GM12878 (cell line): ENCODE measurements at regions of chr10 and their contacts with region 1.

Region 1: DNA sequence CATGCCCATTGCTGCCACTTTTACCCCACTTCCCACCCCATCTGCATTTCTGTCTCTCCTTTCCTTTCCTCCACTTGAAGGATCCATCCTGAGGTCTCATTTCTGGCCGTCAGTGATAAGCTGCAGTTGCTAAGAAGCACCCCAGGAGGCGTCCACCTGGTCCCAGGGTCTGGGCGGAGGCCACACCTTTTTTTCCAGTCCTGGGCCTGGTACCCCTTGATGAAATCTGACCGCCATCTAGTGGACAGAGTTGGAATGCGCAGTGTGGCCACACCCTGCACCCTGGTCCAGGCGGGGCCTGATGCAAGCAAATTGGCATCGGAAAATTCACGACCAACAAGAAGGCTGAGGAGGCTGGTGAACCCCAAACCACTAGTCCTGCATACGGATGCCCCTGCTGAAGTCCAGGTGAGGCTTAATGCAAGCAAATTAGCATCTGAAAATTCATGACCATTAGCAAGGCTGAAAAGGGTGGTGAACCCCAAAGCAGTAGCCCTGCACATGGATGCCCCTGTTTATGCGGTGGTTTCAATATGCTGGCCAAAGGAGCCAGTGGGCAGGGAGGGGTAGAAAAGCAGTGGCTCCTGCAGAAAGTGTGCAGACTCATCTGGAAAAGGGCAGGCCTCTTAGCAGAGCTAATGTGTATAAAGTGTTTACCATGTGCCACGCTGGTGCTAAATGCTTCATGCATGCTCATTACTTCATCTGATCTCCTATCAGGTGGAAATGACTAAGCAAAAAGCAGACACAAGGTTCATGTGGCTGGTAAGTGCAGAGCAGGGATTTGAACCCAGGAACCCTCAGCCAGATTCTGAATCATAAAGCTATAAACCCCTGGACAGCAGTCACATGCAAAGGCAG is 43.2 kb downstream of the GPAM start:
- DNase-seq: peak; percentile 8
- ATAC-seq: peak; percentile 99
- H3K4me3 ChIP-seq: no peak overlapping the region
- H3K27ac ChIP-seq: no peak overlapping the region
- H3K4me1 ChIP-seq: no peaks in the 10 kb centered on the region
- H3K27me3 ChIP-seq: no peaks in the 10 kb centered on the region
- CTCF ChIP-seq: peak; percentile 92 to 97 (median 96); a peak in 5 of 6 replicates
- EP300 ChIP-seq: no peak
- POLR2A ChIP-seq: no peak
- RAD21 ChIP-seq: peak; percentile 68

Region 2: DNA sequence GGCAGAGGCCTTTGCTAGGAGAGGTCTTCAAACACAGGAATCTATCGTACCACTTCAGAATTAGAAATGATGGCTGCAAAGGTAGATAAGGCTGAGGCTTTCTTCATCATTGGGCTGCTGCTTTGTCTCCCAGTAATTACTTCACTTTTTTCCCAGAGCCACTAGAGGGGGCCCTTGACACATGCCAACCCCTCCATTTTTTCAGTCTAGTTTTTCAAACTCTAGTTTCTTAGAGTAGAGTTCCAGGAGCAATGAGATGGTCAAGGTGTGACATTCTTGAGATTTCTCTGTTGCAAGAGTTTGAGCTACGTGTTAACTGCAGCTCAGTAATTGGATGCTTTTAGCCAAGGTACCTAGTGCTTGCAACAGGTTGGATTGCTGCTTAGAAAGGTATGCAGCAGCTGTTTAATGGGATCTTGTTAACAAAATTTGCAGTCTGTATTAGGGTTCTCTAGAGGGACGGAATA is 1530.0 kb before region 1 on chr10:
- CTCF ChIA-PET with region 1: interaction called, 3 read pairs
- POLR2A ChIA-PET with region 1: no interaction called
- RAD21 ChIA-PET with region 1: interaction called, 3 read pairs
- SMC1A ChIA-PET with region 1: interaction called, 3 read pairs
- in situ Hi-C with region 1: loop called (anchors 25 kb)
- intact Hi-C with region 1: no loop called
- DNase-seq: peak; percentile 24
- ATAC-seq: peak; percentile 10; the same call in 2 of the 3 replicates
- H3K4me3 ChIP-seq: no peak overlapping the region
- H3K27ac ChIP-seq: no peak overlapping the region
- H3K4me1 ChIP-seq: peaks cover 31% of the 10 kb centered on the region
- H3K27me3 ChIP-seq: no peaks in the 10 kb centered on the region
- CTCF ChIP-seq: peak; percentile 85 to 92 (median 88)
- EP300 ChIP-seq: no peak
- POLR2A ChIP-seq: no peak
- RAD21 ChIP-seq: peak; percentile 98

Region 3: GRCh38 chr10:111840546-111840945 is 299.8 kb before region 1 on chr10:
- CTCF ChIA-PET with region 1: no interaction called
- POLR2A ChIA-PET with region 1: no interaction called
- RAD21 ChIA-PET with region 1: no interaction called
- SMC1A ChIA-PET with region 1: no interaction called
- in situ Hi-C with region 1: no loop called
- intact Hi-C with region 1: no loop called
- DNase-seq: no peak
- ATAC-seq: no peak
- H3K4me3 ChIP-seq: no peak overlapping the region
- H3K27ac ChIP-seq: no peak overlapping the region
- H3K4me1 ChIP-seq: no peaks in the 10 kb centered on the region
- H3K27me3 ChIP-seq: no peaks in the 10 kb centered on the region
- CTCF ChIP-seq: no peak
- EP300 ChIP-seq: no peak
- POLR2A ChIP-seq: no peak
- RAD21 ChIP-seq: no peak

Region 4: DNA sequence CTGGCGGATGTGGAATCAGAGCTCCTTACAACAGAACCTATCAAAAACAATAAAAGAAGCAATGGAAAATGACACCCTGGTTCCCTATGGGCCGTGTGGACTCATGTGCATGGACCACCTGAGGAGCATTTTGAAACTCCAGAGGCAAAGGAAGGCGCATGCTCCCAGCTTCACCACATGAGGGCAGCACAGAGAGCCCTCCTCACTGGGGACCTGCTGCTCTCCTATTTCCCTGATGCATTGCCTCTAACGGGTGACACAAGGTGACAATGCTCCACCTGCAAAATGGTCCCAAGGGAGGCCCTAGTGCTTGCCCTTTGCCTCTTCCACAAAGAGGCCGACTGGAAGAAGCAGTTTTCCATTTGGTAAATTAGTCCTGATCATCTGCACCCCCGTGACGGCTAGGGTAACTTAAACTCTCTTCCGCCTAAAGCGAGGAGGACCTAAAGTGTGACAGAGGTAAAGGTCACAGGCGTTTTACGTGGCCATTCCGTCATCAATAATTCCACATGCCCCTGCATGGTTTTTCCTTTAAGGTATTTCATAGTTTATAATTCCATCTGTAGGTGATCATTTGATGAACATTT is 24.4 kb before region 1 on chr10:
- CTCF ChIA-PET with region 1: interaction called, 47 read pairs
- POLR2A ChIA-PET with region 1: interaction called, 4 read pairs
- RAD21 ChIA-PET with region 1: interaction called, 6 read pairs
- SMC1A ChIA-PET with region 1: interaction called, 4 read pairs
- in situ Hi-C with region 1: no loop called
- intact Hi-C with region 1: no loop called
- DNase-seq: no peak
- ATAC-seq: peak; percentile 94
- H3K4me3 ChIP-seq: no peak overlapping the region
- H3K27ac ChIP-seq: no peak overlapping the region
- H3K4me1 ChIP-seq: no peaks in the 10 kb centered on the region
- H3K27me3 ChIP-seq: no peaks in the 10 kb centered on the region
- CTCF ChIP-seq: peak; percentile 70 to 87 (median 79)
- EP300 ChIP-seq: no peak
- POLR2A ChIP-seq: no peak
- RAD21 ChIP-seq: peak; percentile 49

Region 5: DNA sequence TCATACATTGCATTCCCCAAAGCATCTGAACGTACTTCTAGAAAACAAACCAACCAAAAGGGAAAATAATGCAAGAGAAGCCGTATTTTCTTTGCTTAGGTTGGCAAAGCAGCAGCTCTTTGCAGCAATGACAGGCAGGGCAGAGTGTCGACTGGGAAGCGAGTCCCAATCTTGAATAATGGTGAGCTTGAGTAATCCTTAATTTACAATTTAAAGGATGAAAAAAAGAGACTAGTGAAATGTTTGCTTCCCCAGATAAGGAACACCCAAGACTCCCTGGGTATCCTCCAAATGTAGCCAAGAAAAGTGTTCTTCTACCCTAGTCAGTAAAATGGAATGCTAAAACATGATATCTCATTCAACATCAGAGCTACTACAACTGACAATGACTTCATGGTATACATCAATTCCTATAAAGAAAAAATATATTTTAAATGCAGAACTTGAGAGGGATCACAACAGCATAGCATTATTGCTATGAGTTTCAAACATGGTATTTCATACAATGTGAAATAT is 11.2 kb after region 1 on chr10:
- CTCF ChIA-PET with region 1: interaction called, 24 read pairs
- POLR2A ChIA-PET with region 1: no interaction called
- RAD21 ChIA-PET with region 1: no interaction called
- SMC1A ChIA-PET with region 1: interaction called, 8 read pairs
- in situ Hi-C with region 1: no loop called
- intact Hi-C with region 1: no loop called
- DNase-seq: no peak
- ATAC-seq: no peak
- H3K4me3 ChIP-seq: no peak overlapping the region
- H3K27ac ChIP-seq: no peak overlapping the region
- H3K4me1 ChIP-seq: no peaks in the 10 kb centered on the region
- H3K27me3 ChIP-seq: no peaks in the 10 kb centered on the region
- CTCF ChIP-seq: no peak
- EP300 ChIP-seq: no peak
- POLR2A ChIP-seq: no peak
- RAD21 ChIP-seq: no peak

Region 6: GRCh38 chr10:112183329-112184051 is 43.1 kb after region 1 on chr10 and contains the start of gene GPAM:
- CTCF ChIA-PET with region 1: interaction called, 12 read pairs
- POLR2A ChIA-PET with region 1: no interaction called
- RAD21 ChIA-PET with region 1: no interaction called
- SMC1A ChIA-PET with region 1: no interaction called
- in situ Hi-C with region 1: no loop called
- intact Hi-C with region 1: no loop called
- DNase-seq: peak; percentile 60
- ATAC-seq: peak; percentile 97
- H3K4me3 ChIP-seq: peak within 1 kb of the TSS; percentile 84
- H3K27ac ChIP-seq: peak within 1 kb of the TSS; percentile 73
- H3K4me1 ChIP-seq: no peaks in the 10 kb centered on the region
- H3K27me3 ChIP-seq: no peaks in the 10 kb centered on the region
- CTCF ChIP-seq: no peak
- EP300 ChIP-seq: peak; percentile 17 to 73; a peak in 1 of 4 replicates
- POLR2A ChIP-seq: peak; percentile 97
- RAD21 ChIP-seq: no peak
- polyA plus RNA-seq, gene GPAM: 3.3 to 5.7 TPM

Region 7: DNA sequence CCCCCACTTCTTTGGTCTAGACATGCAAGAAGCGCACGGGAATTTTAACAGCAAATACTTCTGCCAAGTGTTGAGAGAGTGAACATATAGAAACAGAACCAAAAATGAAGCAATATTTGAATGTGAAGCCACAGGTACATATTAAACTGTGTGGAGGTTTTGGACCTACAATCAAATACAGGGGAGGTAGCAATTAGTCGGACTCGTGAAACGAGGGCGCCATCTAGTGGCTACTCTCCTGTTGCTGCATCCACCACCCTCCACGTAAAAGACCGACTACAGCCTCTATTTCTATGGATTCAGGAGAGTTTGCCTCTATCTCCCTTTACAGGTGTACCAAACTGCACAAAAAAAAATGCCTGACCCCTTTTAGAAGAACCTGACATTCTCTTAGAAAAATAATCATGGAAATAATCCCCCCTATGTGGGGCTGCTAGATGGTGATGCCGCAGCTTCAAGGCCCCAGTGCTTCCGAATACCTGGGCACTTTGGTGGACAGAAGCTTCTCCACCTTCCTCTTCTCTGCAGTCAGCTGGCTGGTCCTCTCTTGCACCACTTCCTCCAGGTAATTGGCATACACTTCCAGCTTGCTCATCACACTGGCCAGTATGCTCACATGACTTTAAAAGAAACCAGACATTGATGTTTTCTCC is 174.6 kb after region 1 on chr10:
- CTCF ChIA-PET with region 1: interaction called, 32 read pairs
- POLR2A ChIA-PET with region 1: no interaction called
- RAD21 ChIA-PET with region 1: interaction called, 4 read pairs
- SMC1A ChIA-PET with region 1: interaction called, 5 read pairs
- in situ Hi-C with region 1: loop called (anchors 5 kb)
- intact Hi-C with region 1: loop called (anchors 1 kb)
- DNase-seq: no peak
- ATAC-seq: peak; percentile 98
- H3K4me3 ChIP-seq: no peak overlapping the region
- H3K27ac ChIP-seq: no peak overlapping the region
- H3K4me1 ChIP-seq: no peaks in the 10 kb centered on the region
- H3K27me3 ChIP-seq: no peaks in the 10 kb centered on the region; a peak in 2 of 4 replicates
- CTCF ChIP-seq: peak; percentile 81 to 88 (median 82)
- EP300 ChIP-seq: no peak
- POLR2A ChIP-seq: no peak
- RAD21 ChIP-seq: peak; percentile 80

Region 8: DNA sequence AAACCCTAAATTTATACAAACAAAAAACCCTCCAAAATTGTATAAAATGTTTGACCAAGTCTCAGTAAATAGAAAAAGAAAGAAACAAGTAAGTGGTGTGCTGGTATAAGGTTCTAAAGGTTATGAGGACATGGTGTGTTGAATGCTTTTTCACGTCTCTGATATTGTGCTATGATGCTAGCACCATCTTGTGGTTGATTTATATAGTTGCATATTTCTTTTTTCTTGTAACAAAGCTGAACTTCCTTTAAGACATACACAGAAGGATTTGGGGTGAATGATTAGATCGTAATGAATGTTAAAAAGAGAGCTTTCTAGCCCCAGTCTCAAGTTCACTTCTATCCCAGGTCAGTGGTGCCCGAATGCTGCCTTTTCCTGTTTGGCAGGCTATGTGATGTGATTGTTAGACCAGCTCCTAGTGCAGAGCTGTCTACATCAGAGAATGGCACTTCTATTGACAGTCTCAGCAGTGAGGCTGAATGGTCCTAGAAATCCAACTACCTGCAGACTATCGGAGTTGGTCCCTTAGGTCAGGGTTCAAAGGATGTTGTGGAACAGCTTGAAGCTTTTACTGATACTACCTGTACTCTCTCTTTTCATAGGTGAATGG is 331.6 kb after region 1 on chr10:
- CTCF ChIA-PET with region 1: interaction called, 37 read pairs
- POLR2A ChIA-PET with region 1: no interaction called
- RAD21 ChIA-PET with region 1: interaction called, 11 read pairs
- SMC1A ChIA-PET with region 1: interaction called, 3 read pairs
- in situ Hi-C with region 1: no loop called
- intact Hi-C with region 1: no loop called
- DNase-seq: peak; percentile 25
- ATAC-seq: peak; percentile 91
- H3K4me3 ChIP-seq: no peak overlapping the region
- H3K27ac ChIP-seq: no peak overlapping the region
- H3K4me1 ChIP-seq: no peaks in the 10 kb centered on the region
- H3K27me3 ChIP-seq: no peaks in the 10 kb centered on the region
- CTCF ChIP-seq: peak; percentile 56 to 82 (median 68); a peak in 5 of 6 replicates
- EP300 ChIP-seq: no peak
- POLR2A ChIP-seq: no peak
- RAD21 ChIP-seq: peak; percentile 78